Thyroid gland (tissue), 4 donors: ENCODE measurements at regions of chr1 and their contacts with region 1.

Region 1: GRCh38 chr1:26145041-26145959 is 13.6 kb upstream of the FAM110D start:
- DNase-seq: peak; percentile 88 to 89
- H3K4me3 ChIP-seq: no peak overlapping the region
- H3K27ac ChIP-seq: no peak overlapping the region
- H3K4me1 ChIP-seq: peaks cover 4 to 6% of the 10 kb centered on the region in 2 donors
- H3K27me3 ChIP-seq: no peaks in the 10 kb centered on the region
- CTCF ChIP-seq: peak; percentile 39 to 86 (median 72)
- POLR2A ChIP-seq: no peak

Region 2: DNA sequence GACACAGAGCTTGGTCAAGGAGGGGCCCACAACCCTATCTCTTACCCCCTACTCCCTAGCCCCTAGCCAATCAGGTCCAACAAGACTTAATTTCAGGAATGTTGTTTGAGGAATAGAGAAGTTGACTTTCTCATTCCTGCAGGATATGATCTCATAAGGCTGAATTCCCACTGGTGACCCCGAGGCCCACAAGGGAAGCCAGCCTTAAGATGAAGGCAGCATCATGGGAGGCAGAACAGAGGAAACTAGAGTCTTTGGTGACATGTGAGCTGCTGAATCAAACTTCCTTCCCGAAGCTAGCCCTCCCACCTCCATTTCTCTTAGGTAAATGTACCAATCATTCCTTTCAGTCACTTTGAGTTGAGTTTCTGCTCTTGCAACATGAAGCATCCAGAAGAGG is 42.8 kb before region 1 on chr1:
- intact Hi-C with region 1: loop called (anchors 2 kb)
- DNase-seq: no peak
- H3K4me3 ChIP-seq: no peak overlapping the region
- H3K27ac ChIP-seq: no peak overlapping the region
- H3K4me1 ChIP-seq: no peaks in the 10 kb centered on the region
- H3K27me3 ChIP-seq: no peaks in the 10 kb centered on the region
- CTCF ChIP-seq: no peak
- POLR2A ChIP-seq: no peak